ENCODE measurements at regions of chr21 and their contacts with region 1.

Region 1: DNA sequence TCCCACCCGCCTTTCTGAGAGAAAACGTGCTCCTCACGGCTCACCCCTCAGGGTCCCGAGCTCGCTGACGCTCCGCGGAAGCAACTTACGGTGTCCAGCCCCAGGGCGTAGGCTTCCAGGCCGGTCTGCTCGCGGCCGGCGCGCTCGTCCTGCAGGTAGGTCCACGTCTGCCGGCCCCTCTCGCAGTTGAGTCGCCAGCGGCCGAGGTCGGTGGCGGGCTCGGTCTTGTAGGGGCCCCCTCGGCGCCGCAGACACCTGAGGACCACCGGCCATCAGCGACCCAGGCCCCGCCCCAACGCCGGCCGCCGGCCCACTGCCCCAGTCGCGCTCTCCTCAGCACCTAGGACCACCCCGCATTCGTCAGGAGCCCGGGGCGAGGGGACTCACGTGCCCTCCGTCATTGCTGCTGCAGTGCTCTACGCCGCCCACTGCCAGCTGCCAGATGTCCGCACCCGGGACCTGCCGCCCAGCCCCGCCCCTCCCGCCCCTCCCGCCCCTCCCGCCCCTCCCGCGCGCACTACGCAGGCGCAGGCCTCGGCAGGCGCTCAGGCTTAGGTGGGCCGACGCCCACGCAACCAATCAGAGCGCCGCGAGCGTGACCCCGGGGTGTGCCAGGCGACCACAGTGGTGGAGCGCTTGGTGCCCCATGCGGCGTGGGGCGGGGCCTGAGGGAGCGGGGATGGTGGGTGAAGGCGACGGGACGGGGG is at the start of gene LSS:
- DNase-seq: peak; percentile 93 to 99
- ATAC-seq: peak; percentile 91 to 97 (median 95)
- H3K4me3 ChIP-seq: peak within 1 kb of the TSS; percentile 82
- H3K4me3 Mint-ChIP-seq: peak within 1 kb of the TSS; percentile 95
- H3K27ac ChIP-seq: peak within 1 kb of the TSS; percentile 59
- H3K27ac Mint-ChIP-seq: peak within 1 kb of the TSS; percentile 78 to 88
- H3K4me1 ChIP-seq: peaks cover 23% of the 10 kb centered on the region
- H3K4me1 Mint-ChIP-seq: peaks cover 74 to 75% of the 10 kb centered on the region in 2 donors
- H3K27me3 ChIP-seq: no peaks in the 10 kb centered on the region
- H3K27me3 Mint-ChIP-seq: no peaks in the 10 kb centered on the region
- CTCF ChIP-seq: no peak
- total RNA-seq, gene LSS: 59.9 to 82.2 (median 62.7) TPM

Region 2: GRCh38 chr21:45950734-45951515 is 277.6 kb before region 1 on chr21:
- intact Hi-C with region 1: no loop called
- DNase-seq: no peak
- ATAC-seq: no peak
- H3K4me3 ChIP-seq: no peak overlapping the region
- H3K4me3 Mint-ChIP-seq: no peak overlapping the region
- H3K27ac ChIP-seq: no peak overlapping the region
- H3K27ac Mint-ChIP-seq: no peak overlapping the region
- H3K4me1 ChIP-seq: no peaks in the 10 kb centered on the region
- H3K4me1 Mint-ChIP-seq: no peaks in the 10 kb centered on the region
- H3K27me3 ChIP-seq: no peaks in the 10 kb centered on the region
- H3K27me3 Mint-ChIP-seq: peaks cover 6 to 7% of the 10 kb centered on the region in 2 donors
- CTCF ChIP-seq: no peak

Region 3: DNA sequence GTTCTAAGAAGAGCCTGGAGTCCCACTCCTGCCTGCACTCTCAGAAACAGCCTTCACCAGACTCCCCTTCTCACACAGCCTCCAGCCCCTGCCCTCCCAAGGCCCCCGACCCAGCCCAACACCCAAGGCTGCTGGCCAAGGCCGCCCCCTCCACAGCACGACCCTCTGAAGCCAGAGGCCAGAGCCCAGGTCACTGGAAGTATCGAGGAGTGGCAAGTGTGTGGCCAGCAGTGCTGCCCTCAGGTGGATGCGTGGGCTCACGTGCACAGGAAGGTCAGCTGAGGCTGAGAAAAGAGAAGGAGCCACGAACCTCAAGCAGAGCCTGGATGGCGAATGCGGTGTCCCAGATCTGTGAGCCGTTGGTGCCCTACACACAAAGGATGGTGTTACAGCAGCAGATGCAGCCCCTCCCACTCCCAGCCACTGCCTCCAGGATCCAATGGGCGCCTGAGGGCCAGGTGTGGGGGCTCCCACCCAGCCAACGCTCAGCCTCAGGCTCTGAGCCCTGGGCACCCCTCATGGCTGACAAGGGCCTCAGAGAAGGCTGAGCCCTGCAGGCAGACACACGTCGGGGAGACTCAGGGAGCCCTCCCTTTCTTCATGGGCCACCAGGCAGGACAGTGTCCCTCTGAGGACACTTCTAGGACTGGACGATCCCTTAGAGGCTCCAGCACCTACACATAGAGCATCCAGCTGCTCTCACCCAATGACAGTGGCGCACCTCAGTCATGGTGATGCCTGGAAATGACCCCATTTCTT is 17.9 kb before region 1 on chr21:
- intact Hi-C with region 1: no loop called
- DNase-seq: no peak
- ATAC-seq: no peak
- H3K4me3 ChIP-seq: no peak overlapping the region
- H3K4me3 Mint-ChIP-seq: no peak overlapping the region
- H3K27ac ChIP-seq: no peak overlapping the region
- H3K27ac Mint-ChIP-seq: no peak overlapping the region
- H3K4me1 ChIP-seq: no peaks in the 10 kb centered on the region
- H3K4me1 Mint-ChIP-seq: no peaks in the 10 kb centered on the region
- H3K27me3 ChIP-seq: no peaks in the 10 kb centered on the region
- H3K27me3 Mint-ChIP-seq: no peaks in the 10 kb centered on the region
- CTCF ChIP-seq: no peak

Region 4: GRCh38 chr21:46243325-46243724 is 14.8 kb after region 1 on chr21:
- intact Hi-C with region 1: no loop called
- DNase-seq: no peak
- ATAC-seq: no peak
- H3K4me3 ChIP-seq: no peak overlapping the region
- H3K4me3 Mint-ChIP-seq: no peak overlapping the region
- H3K27ac ChIP-seq: no peak overlapping the region
- H3K27ac Mint-ChIP-seq: peak overlapping the region; percentile 61 to 72
- H3K4me1 ChIP-seq: no peaks in the 10 kb centered on the region
- H3K4me1 Mint-ChIP-seq: peaks cover 6 to 7% of the 10 kb centered on the region in 2 donors
- H3K27me3 ChIP-seq: no peaks in the 10 kb centered on the region
- H3K27me3 Mint-ChIP-seq: no peaks in the 10 kb centered on the region
- CTCF ChIP-seq: no peak

Region 5: GRCh38 chr21:46253610-46254124 is 25.2 kb after region 1 on chr21:
- intact Hi-C with region 1: loop called (anchors 2 kb)
- DNase-seq: peak; percentile 48 to 77
- ATAC-seq: peak; percentile 92 to 93 (median 93)
- H3K4me3 ChIP-seq: no peak overlapping the region
- H3K4me3 Mint-ChIP-seq: peak overlapping the region; percentile 71
- H3K27ac ChIP-seq: peak overlapping the region; percentile 65
- H3K27ac Mint-ChIP-seq: peak overlapping the region; percentile 96 to 97
- H3K4me1 ChIP-seq: peaks cover 29% of the 10 kb centered on the region
- H3K4me1 Mint-ChIP-seq: peaks cover 41 to 48% of the 10 kb centered on the region in 2 donors
- H3K27me3 ChIP-seq: no peaks in the 10 kb centered on the region
- H3K27me3 Mint-ChIP-seq: no peaks in the 10 kb centered on the region
- CTCF ChIP-seq: no peak

Region 6: GRCh38 chr21:46285761-46286496 is 57.4 kb after region 1 on chr21 and contains the start of gene YBEY:
- intact Hi-C with region 1: no loop called
- DNase-seq: peak; percentile 76 to 92
- ATAC-seq: peak; percentile 86 to 94 (median 88)
- H3K4me3 ChIP-seq: peak within 1 kb of the TSS; percentile 76
- H3K4me3 Mint-ChIP-seq: peak within 1 kb of the TSS; percentile 99
- H3K27ac ChIP-seq: peak within 1 kb of the TSS; percentile 74
- H3K27ac Mint-ChIP-seq: peak within 1 kb of the TSS; percentile 90 to 92
- H3K4me1 ChIP-seq: peaks cover 47% of the 10 kb centered on the region
- H3K4me1 Mint-ChIP-seq: peaks cover 32 to 50% of the 10 kb centered on the region in 2 donors
- H3K27me3 ChIP-seq: no peaks in the 10 kb centered on the region
- H3K27me3 Mint-ChIP-seq: no peaks in the 10 kb centered on the region
- CTCF ChIP-seq: peak; percentile 21
- total RNA-seq, gene YBEY: 10.8 to 13.7 (median 12.7) TPM

Measured in natural killer cell (primary cell).